Mucosa of descending colon (tissue), 3 donors: ENCODE measurements at regions of chr5 and their contacts with region 1.

Region 1: GRCh38 chr5:98742396-98743073 is 30.9 kb upstream of the RGMB start:
- DNase-seq: no peak
- ATAC-seq: no peak
- H3K4me3 ChIP-seq: no peak overlapping the region
- H3K4me1 ChIP-seq: no peaks in the 10 kb centered on the region
- CTCF ChIP-seq: no peak

Region 2: GRCh38 chr5:97425511-97425910 is 1317.0 kb before region 1 on chr5:
- intact Hi-C with region 1: loop called in 1 of 2 experiments (anchors 5 kb)
- DNase-seq: peak in 2 of 3 donors; percentile 19 to 29
- ATAC-seq: no peak
- H3K4me3 ChIP-seq: no peak overlapping the region
- H3K4me1 ChIP-seq: no peaks in the 10 kb centered on the region
- CTCF ChIP-seq: no peak

Region 3: DNA sequence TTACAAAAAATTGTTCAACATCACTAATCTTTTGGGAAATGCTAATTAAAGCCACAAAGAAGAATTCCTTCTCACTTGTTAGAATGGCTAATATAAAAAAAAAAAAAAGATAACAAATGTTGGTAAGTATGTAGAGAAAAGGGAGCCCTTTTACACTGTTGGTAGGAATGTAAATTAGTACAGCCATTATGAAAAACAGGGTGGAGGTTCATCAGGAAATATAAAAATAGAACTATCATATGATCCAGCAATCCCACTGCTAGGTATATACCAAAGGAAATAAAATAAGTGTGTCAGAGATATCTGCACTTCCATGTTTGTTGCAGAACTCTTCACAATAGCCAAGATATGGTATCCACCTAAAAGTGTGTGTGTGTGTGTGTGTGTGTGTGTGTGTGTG is 52.5 kb before region 1 on chr5:
- intact Hi-C with region 1: no loop called
- DNase-seq: no peak
- ATAC-seq: no peak
- H3K4me3 ChIP-seq: no peak overlapping the region
- H3K4me1 ChIP-seq: no peaks in the 10 kb centered on the region
- CTCF ChIP-seq: no peak